ENCODE measurements at regions of chr19 and their contacts with region 1.

Region 1: DNA sequence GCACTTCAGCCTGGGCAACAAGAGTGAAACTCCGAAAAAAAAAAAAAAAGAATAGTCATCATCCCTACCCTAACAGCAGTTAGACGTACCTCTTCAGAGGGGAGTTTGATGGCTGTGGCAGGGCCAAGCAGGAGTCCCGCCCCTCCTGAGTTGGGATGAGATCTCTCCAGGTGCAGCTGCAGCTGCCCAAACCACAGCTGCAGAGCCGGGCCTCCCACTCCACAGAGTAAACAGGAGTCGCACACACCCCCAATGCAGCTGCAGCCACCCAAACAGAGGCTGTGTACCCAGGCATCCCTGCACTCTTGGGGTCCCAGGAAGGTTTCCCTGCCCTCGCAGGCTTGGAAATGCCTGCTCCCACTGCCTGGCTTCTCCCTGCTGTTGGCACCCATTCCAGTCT is 17.4 kb upstream of the MLLT1 start:
- DNase-seq: no peak
- H3K4me3 ChIP-seq: no peak overlapping the region
- H3K27ac ChIP-seq: no peak overlapping the region
- H3K4me1 ChIP-seq: no peaks in the 10 kb centered on the region
- H3K27me3 ChIP-seq: peaks cover 2% of the 10 kb centered on the region
- CTCF ChIP-seq: no peak

Region 2: DNA sequence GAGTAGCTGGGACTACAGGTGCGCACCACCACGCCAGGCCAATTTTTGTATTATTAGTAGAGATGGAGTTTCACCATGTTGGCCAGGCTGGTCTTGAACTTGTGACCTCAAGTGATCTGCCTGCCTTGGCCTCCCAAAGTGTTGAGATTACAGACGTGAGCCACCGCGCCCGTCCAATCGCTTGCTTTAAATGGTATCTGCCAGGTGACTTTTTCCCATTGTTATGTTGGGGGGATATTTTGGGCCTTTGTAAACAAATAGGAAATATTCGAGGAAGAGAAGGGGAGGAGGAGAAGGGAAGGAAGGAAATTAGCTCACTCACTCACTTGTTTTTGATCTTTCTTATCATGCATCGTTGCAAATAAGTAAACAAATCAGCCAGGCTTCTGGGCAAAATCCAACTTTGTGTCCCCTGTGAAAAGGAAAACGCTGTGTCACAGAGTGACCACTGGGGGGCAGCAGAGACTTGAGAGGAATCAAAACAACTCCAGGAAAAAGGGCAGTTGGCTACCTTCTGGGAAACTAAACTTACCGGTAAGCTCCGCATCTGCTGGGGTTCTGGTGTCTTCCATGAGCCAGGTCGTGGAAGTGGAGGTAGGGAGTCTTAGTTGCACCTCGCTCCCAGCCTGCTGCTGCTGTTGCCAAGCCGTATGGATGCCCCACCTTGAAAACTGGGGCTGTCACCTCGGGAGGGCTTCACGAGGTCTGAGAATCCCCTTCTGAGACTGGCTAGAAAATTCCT is 310.0 kb before region 1 on chr19:
- CTCF ChIA-PET with region 1: no interaction called
- dilution Hi-C with region 1: loop called (anchors 5 kb)
- in situ Hi-C with region 1: no loop called
- intact Hi-C with region 1: loop called (anchors 1 kb)
- DNase-seq: peak; percentile 61
- H3K4me3 ChIP-seq: no peak overlapping the region
- H3K27ac ChIP-seq: no peak overlapping the region
- H3K4me1 ChIP-seq: peaks cover 15% of the 10 kb centered on the region
- H3K27me3 ChIP-seq: no peaks in the 10 kb centered on the region
- CTCF ChIP-seq: peak; percentile 93 to 94

Region 3: DNA sequence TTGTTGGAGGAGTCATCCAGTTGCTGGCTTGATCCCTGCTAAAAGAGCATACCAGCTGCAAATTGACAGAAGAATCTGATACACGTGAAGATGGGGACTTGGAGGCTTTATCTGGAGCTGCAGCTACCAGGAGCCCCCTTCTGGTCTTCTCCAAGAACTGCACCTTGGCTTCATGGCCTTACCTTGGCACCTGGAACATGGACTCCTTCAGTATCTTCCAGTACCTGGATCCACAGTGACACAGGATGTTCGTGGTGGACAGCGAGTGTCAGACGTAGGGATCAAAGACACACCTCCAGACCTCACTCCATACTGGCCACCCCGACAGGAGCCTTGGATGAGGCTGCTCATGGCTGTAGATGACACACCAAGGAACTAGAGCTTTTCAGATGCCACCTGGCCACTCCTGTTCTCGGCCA is 171.6 kb before region 1 on chr19:
- CTCF ChIA-PET with region 1: interaction called, 3 read pairs
- dilution Hi-C with region 1: no loop called
- in situ Hi-C with region 1: no loop called
- intact Hi-C with region 1: loop called (anchors 1 kb)
- DNase-seq: peak; percentile 73
- H3K4me3 ChIP-seq: no peak overlapping the region
- H3K27ac ChIP-seq: no peak overlapping the region
- H3K4me1 ChIP-seq: no peaks in the 10 kb centered on the region
- H3K27me3 ChIP-seq: no peaks in the 10 kb centered on the region
- CTCF ChIP-seq: peak; percentile 96 to 97

Region 4: DNA sequence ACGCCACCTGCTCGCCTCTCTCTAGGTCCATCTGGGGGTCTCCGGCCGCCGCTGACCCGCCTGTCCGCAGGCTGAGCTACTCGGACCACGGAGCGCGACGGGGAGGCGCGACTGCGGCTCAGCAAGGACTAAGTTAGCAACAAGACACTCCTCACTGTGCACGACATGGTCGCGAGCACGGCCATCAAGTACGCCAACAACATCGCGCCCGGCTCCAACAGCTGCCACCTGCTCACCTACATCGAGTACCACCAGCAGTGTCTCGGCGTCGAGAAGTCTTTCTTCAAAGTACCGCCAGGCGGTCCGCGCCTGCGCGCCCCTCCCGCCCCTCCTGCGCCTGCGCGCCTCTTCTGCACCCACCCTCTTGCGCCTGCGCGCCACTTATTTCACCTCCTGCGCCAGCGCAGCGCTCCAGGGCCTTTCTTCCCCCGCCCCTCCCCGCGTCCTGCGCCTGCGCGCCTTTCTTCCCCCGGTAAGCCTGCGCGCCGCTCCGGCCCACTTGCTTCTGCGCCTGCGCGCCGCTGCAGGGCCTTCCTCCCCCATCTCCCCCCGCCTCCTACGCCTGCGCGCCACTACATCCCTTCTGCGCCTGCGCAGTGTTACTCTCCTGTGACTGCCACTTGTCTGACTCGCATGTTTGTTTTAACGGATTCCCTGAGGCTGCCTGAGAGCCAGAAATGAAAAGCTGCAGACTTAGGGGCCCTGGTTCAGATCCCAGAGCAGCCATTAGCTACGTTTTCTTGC is 97.8 kb before region 1 on chr19:
- CTCF ChIA-PET with region 1: interaction called, 20 read pairs
- dilution Hi-C with region 1: no loop called
- in situ Hi-C with region 1: no loop called
- intact Hi-C with region 1: no loop called
- DNase-seq: peak; percentile 98
- H3K4me3 ChIP-seq: peak overlapping the region; percentile 79 to 100 (median 95)
- H3K27ac ChIP-seq: peak overlapping the region; percentile 2
- H3K4me1 ChIP-seq: peaks cover 5% of the 10 kb centered on the region
- H3K27me3 ChIP-seq: no peaks in the 10 kb centered on the region
- CTCF ChIP-seq: peak; percentile 16 to 36

Region 5: GRCh38 chr19:6312018-6312417 is 14.8 kb after region 1 on chr19:
- CTCF ChIA-PET with region 1: no interaction called
- dilution Hi-C with region 1: no loop called
- in situ Hi-C with region 1: no loop called
- intact Hi-C with region 1: no loop called
- DNase-seq: no peak
- H3K4me3 ChIP-seq: no peak overlapping the region
- H3K27ac ChIP-seq: no peak overlapping the region
- H3K4me1 ChIP-seq: no peaks in the 10 kb centered on the region
- H3K27me3 ChIP-seq: no peaks in the 10 kb centered on the region
- CTCF ChIP-seq: no peak

Region 6: GRCh38 chr19:6340493-6341201 is 43.4 kb after region 1 on chr19:
- CTCF ChIA-PET with region 1: no interaction called
- dilution Hi-C with region 1: no loop called
- in situ Hi-C with region 1: no loop called
- intact Hi-C with region 1: no loop called
- DNase-seq: no peak
- H3K4me3 ChIP-seq: no peak overlapping the region
- H3K27ac ChIP-seq: no peak overlapping the region
- H3K4me1 ChIP-seq: no peaks in the 10 kb centered on the region
- H3K27me3 ChIP-seq: no peaks in the 10 kb centered on the region
- CTCF ChIP-seq: no peak

Region 7: GRCh38 chr19:6498321-6499036 is 201.3 kb after region 1 on chr19:
- CTCF ChIA-PET with region 1: no interaction called
- dilution Hi-C with region 1: loop called (anchors 5 kb)
- in situ Hi-C with region 1: no loop called
- intact Hi-C with region 1: no loop called
- DNase-seq: no peak
- H3K4me3 ChIP-seq: no peak overlapping the region
- H3K27ac ChIP-seq: no peak overlapping the region
- H3K4me1 ChIP-seq: peaks cover 5% of the 10 kb centered on the region
- H3K27me3 ChIP-seq: peaks cover 9% of the 10 kb centered on the region
- CTCF ChIP-seq: no peak

Measured in mammary epithelial cell (primary cell).